HCT116 (cell line): ENCODE measurements at regions of chr3 and their contacts with region 1.

Region 1: GRCh38 chr3:197711973-197712707 is 24.6 kb downstream of the RUBCN start:
- DNase-seq: peak; percentile 96
- ATAC-seq: peak; percentile 97
- H3K4me3 ChIP-seq: peak overlapping the region; percentile 31 to 53
- H3K27ac ChIP-seq: peak overlapping the region; percentile 94
- H3K4me1 ChIP-seq: peaks cover 33 to 64% of the 10 kb centered on the region in 2 experiments
- H3K27me3 ChIP-seq: no peaks in the 10 kb centered on the region
- CTCF ChIP-seq: no peak
- POLR2A ChIP-seq: no peak
- RAD21 ChIP-seq: no peak; the same call in 1 of the 2 replicates

Region 2: DNA sequence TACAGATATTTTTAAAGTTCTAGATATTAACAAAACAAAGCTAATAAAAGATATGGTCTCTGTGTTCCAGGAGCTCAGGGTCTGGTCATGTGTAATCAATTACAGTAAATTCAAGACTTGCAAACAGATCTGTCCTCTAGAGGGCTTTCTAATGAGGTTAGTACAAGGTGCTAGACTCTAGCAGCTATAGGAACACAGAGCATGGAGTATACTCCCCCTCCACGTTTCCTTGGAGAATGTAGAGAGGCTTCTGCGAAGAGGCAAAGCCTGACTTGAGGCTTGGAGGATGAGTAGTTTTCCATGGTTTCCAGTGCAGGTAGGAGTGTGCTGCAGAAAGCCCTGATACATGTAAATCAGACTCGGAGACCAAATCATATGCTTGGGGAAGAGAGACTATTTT is 381.0 kb before region 1 on chr3:
- CTCF ChIA-PET with region 1: no interaction called
- POLR2A ChIA-PET with region 1: no interaction called
- RAD21 ChIA-PET with region 1: no interaction called
- intact Hi-C with region 1: no loop called
- DNase-seq: peak; percentile 27
- ATAC-seq: peak; percentile 96
- H3K4me3 ChIP-seq: no peak overlapping the region
- H3K27ac ChIP-seq: no peak overlapping the region
- H3K4me1 ChIP-seq: no peaks in the 10 kb centered on the region
- H3K27me3 ChIP-seq: no peaks in the 10 kb centered on the region
- CTCF ChIP-seq: peak in 2 of 3 experiments; percentile 32 to 37; a peak in 3 of 6 replicates
- POLR2A ChIP-seq: no peak
- RAD21 ChIP-seq: peak; percentile 33

Region 3: GRCh38 chr3:197749601-197750395 is 37.7 kb after region 1 on chr3 and contains the start of gene FYTTD1:
- CTCF ChIA-PET with region 1: no interaction called
- POLR2A ChIA-PET with region 1: interaction called, 4 read pairs
- RAD21 ChIA-PET with region 1: no interaction called
- intact Hi-C with region 1: loop called (anchors 2 kb)
- DNase-seq: peak; percentile 61
- ATAC-seq: peak; percentile 93
- H3K4me3 ChIP-seq: peak within 1 kb of the TSS; percentile 70 to 93
- H3K27ac ChIP-seq: peak within 1 kb of the TSS; percentile 85
- H3K4me1 ChIP-seq: peaks cover 9 to 41% of the 10 kb centered on the region in 2 experiments; a peak in 3 of 4 replicates
- H3K27me3 ChIP-seq: no peaks in the 10 kb centered on the region
- CTCF ChIP-seq: peak in 2 of 3 experiments; percentile 26 to 33; a peak in 2 of 6 replicates
- POLR2A ChIP-seq: peak; percentile 84
- RAD21 ChIP-seq: no peak
- total RNA-seq, gene FYTTD1: 70.7 TPM